Activated CD4-positive, alpha-beta memory T cell treated with anti-CD3 and anti-CD28 coated beads, Interleukin-2, amount 10 ng/mL, durations not matched to agents 7 days and 5 days (primary cell): ENCODE measurements at regions of chr2 and their contacts with region 1.

Region 1: DNA sequence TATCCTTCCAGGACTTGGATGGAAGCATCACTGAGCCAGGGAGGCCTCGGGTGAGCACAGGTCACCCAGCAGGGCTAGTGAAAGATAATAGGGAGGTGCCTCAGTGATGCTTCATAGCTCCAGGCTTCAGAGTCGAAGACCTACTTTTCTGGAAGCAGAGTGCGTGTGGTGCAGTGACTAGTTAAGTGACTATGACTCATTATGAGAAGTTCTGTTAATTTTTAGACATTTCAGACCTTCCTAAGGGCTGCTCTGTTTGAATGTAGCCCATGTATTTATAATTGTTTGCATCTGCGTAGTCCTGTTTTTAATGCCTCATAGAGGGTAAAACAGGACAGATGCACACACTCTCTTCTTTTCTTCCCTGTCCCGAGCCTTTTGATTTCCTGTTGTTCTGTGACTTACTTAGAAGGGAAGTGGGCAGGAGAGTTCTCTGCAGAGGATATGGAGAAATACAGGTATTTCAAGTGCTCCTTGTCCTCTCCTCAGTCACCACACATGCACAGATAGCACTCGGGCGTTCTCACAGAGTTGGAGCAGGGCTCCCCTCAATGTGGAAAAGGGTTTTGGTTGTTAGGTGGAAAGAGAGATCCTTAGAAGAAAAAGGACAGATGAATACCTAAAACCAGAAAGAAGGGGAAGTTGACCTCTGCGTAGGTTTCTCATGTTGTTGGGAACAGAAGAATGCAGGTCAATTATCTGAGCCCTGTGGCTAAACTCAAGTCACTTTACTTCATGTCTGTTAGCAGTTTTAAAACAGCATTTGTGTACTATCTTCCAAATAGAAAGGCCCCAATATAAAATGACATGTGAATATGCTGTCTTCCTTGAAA is 34.7 kb downstream of the RALB start:
- DNase-seq: peak; percentile 54
- H3K4me3 Mint-ChIP-seq: peak overlapping the region; percentile 43
- H3K27ac Mint-ChIP-seq: peak overlapping the region; percentile 89
- H3K4me1 Mint-ChIP-seq: peaks cover 75% of the 10 kb centered on the region
- H3K27me3 Mint-ChIP-seq: no peaks in the 10 kb centered on the region

Region 2: DNA sequence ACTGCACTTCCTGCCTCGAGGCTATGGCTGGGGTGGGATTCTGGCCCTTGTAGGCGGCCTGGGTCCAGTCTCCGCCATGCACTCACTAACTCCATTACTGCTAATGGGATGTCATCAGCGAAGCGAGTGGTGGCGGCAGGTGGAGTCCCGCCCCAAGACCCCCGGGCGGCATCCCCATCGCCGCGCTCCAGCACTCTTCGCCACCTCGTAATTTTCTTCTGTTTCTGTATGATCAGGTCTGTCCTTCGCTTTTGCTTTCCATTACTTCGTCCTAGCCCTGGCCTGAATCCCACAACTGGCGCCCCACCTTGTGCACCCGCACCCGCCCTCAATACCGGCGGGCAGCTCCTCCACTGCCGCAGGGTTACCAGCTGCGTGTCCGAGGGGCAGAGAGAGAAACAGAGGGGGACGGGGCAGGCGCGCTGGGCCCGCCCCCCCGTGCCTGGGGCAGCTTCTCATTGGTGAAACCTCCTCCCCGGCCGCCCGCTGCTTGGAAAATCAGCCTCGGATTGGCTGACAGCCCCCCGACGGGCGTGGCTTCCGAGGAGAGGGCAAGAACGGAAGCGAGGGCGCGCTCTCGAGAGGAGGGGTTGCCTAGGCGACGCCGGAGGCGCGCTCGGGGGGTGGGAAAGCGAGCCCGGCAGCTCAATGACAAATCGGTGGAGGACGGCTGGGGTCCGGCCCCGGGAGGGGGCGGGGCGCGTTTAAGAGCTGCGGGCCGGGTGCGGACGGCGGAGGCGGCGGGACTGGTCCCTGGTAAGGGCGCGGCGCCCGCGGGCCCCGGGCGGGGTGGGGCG is 35.0 kb before region 1 on chr2 and contains the start of gene RALB:
- CTCF ChIA-PET with region 1: interaction called, 6 read pairs
- POLR2A ChIA-PET with region 1: interaction called, 21 read pairs
- DNase-seq: peak; percentile 99
- H3K4me3 Mint-ChIP-seq: peak within 1 kb of the TSS; percentile 99
- H3K27ac Mint-ChIP-seq: peak within 1 kb of the TSS; percentile 85
- H3K4me1 Mint-ChIP-seq: peaks cover 64% of the 10 kb centered on the region
- H3K27me3 Mint-ChIP-seq: peaks cover 10% of the 10 kb centered on the region
- total RNA-seq, gene RALB: 59.2 to 59.3 TPM